Vagina (tissue), 2 donors: ENCODE measurements at regions of chr17 and their contacts with region 1.

Region 1: GRCh38 chr17:77096570-77097214 is 44.1 kb upstream of the SEC14L1 start:
- DNase-seq: no peak
- H3K4me3 ChIP-seq: no peak overlapping the region
- H3K27ac ChIP-seq: peak overlapping the region; percentile 88
- H3K4me1 ChIP-seq: peaks cover 45% of the 10 kb centered on the region
- H3K27me3 ChIP-seq: no peaks in the 10 kb centered on the region
- CTCF ChIP-seq: peak in 2 of 3 experiments; percentile 39 to 86
- POLR2A ChIP-seq: no peak

Region 2: DNA sequence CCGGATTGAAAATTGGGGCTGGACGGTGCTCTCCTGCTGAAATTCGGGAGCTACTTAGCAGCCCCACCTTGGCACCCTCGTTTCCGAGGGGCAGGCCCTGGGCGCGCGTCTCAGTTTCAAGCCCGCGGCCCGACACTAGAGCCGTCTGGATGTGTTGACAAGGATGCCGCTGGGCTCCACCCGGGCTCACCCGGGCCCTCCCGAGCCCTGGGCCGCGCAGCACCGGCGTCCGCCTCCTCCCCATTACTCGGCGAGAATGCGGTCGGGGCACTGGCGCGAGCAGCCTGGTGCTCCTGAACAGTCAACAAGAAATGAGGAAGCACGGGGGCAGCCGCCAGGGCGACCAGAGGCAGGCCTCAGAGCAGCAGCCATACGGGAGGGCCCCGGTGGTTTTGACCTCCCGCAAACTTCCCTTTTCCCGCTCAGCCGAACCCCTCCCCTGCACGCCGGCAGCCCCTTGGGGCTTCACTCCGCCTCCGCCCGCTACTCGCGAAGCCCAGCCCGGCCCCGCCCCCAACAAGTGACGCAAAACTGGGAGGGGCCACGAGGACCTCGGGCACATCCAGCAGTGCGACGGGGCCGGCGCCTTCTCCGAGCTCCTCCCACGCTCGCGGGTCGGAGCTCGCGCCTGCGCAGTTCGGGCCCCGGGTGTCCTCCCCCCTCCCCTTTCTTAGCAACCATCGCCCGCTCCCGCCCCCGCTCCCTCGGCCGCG is 43.6 kb after region 1 on chr17:
- intact Hi-C with region 1: loop called (anchors 5 kb)
- DNase-seq: peak in 1 of 2 donors; percentile 98
- H3K4me3 ChIP-seq: peak overlapping the region; percentile 94 to 96
- H3K27ac ChIP-seq: peak overlapping the region; percentile 95
- H3K4me1 ChIP-seq: peaks cover 31% of the 10 kb centered on the region
- H3K27me3 ChIP-seq: no peaks in the 10 kb centered on the region
- CTCF ChIP-seq: no peak
- POLR2A ChIP-seq: peak; percentile 91 to 97

Region 3: DNA sequence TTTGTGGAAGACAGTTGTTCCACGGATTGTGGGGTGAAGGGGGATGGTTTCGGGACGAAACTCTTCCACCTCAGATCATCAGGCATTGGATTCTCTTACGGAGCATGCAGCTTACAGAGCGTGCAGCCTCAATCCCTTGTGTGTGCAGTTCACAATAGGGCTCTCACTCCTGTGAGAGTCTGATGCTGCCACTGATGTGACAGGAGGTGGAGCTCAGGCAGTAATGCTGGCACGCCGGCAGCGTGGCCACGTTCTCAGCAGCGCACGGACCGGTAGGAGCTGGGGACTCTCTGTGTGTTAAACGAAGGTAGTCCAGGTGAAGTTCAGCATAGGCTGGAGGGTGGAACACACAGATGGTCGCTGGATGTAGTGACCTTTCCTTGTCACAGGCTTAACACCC is 81.9 kb after region 1 on chr17:
- intact Hi-C with region 1: no loop called
- DNase-seq: no peak
- H3K4me3 ChIP-seq: no peak overlapping the region
- H3K27ac ChIP-seq: no peak overlapping the region
- H3K4me1 ChIP-seq: peaks cover 25% of the 10 kb centered on the region
- H3K27me3 ChIP-seq: no peaks in the 10 kb centered on the region
- CTCF ChIP-seq: no peak
- POLR2A ChIP-seq: no peak

Region 4: DNA sequence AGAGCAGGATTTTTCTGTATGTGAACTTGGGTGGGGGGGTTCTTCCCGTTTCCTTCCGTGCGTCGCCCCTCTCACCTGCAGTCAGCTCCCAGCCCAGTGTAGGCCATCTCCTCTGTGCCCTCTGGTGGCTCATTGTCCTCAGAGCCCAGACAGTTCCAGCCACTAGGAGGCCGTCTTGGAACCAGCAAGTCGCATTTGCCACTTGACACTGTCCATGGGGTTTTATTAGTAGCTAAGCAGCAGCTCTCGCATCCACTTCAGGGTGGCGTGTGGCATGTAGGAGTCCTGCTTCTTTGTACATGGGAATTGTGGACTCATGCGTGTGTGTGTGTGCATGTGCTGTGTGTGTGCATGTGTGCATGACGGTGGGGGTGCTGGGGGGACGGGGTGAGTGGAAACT is 118.1 kb after region 1 on chr17:
- intact Hi-C with region 1: loop called (anchors 10 kb)
- DNase-seq: no peak
- H3K4me3 ChIP-seq: no peak overlapping the region
- H3K27ac ChIP-seq: no peak overlapping the region
- H3K4me1 ChIP-seq: no peaks in the 10 kb centered on the region
- H3K27me3 ChIP-seq: no peaks in the 10 kb centered on the region
- CTCF ChIP-seq: peak in 1 of 3 experiments; percentile 22
- POLR2A ChIP-seq: no peak